Colonic mucosa (tissue), 4 donors: ENCODE measurements at regions of chr2 and their contacts with region 1.

Region 1: DNA sequence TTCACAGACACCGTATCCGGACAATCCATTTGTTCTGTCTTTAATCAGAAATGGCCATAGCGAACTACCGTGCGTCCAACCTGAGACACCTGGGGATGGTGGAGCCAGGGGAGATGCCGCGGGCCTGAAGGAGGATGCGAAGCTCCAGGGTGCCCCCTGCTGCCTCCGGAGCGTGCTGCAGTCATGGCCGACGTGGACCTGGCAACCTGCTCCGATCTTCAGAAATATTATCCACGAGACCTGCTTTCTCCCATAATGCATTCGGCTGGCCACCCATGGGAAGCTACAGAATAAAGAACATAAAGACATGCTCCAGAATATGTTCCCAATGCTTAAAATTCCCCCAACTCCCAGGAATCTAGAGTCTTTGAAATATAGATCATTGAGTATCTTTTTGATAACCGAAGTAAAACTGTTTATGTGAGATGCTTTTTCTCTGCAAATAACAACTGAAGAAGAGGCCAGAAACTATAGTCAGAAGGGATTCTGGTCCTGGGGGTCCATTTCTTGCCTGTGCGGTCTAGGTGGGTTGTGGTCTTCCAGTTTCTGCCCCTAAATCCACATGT is 30.7 kb upstream of the SLC66A3 start:
- DNase-seq: peak; percentile 80
- H3K4me3 ChIP-seq: no peak overlapping the region
- H3K27ac ChIP-seq: no peak overlapping the region
- H3K4me1 ChIP-seq: no peaks in the 10 kb centered on the region
- H3K27me3 ChIP-seq: no peaks in the 10 kb centered on the region
- CTCF ChIP-seq: peak; percentile 78

Region 2: DNA sequence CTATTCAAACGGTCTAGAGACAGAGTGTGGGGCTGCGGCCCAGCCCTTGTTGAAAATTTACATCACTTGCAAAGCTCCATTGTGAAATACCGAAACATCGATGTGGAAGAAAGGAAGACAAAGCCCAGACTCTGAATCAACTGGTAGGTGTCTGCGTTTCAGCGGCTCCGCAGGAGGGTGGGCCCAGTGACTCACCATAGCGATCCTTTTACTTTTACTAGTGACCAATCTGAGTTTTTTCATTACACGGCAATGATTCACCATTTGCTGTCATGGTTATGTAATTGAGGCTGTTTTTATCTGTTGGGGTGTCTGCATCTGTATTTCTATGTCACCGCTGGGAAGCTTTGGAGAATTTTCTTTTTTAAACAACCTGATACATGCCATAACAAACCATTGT is 609.8 kb before region 1 on chr2:
- intact Hi-C with region 1: no loop called
- DNase-seq: no peak
- H3K4me3 ChIP-seq: no peak overlapping the region
- H3K27ac ChIP-seq: no peak overlapping the region
- H3K4me1 ChIP-seq: no peaks in the 10 kb centered on the region
- H3K27me3 ChIP-seq: no peaks in the 10 kb centered on the region
- CTCF ChIP-seq: no peak

Region 3: GRCh38 chr2:10832203-10832936 is 292.2 kb before region 1 on chr2:
- intact Hi-C with region 1: loop called (anchors 2 kb)
- DNase-seq: peak; percentile 84
- H3K4me3 ChIP-seq: no peak overlapping the region
- H3K27ac ChIP-seq: no peak overlapping the region
- H3K4me1 ChIP-seq: peaks cover 4% of the 10 kb centered on the region
- H3K27me3 ChIP-seq: no peaks in the 10 kb centered on the region
- CTCF ChIP-seq: peak; percentile 97

Region 4: DNA sequence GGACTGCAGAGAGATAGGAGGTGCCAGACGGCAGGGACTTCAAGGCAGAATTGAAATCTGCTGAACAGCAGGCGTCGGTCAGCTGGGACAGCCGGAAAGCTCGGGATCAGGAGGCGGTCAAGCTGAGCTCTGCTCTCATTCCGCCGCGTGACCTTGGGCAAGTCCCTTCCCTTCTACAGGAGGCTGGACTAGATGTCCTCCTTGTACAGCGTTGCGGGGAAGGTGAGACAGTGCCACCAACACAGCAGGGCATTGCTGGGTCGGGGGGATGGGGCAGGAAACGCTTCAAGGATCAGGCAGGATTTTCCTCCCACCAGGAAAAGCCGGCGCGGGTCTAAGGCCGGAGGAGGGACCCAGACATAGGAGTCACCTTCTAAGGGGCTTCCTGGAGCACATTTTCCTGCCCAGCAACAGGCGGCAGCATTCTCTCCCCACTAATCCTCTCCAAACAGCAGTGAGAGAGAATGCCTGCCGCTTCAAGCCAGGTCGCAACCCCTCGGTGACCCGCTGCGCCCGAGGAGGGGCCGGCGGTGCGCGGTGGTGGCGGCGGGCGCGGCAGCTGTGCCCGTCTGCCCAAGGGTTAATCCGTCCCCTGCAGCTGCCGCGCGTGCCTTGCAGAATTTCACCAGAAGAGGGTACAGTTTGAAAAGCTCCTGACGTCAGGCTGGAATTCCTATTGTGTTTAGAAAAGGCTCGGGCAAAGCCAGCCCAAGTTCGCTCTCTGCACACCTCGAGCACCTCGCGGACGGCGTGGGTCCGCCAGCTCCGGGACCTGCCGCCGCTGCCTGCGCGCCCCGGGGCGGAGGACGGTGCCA is 213.1 kb before region 1 on chr2 and contains the start of gene KCNF1:
- intact Hi-C with region 1: loop called (anchors 5 kb)
- DNase-seq: peak; percentile 32
- H3K4me3 ChIP-seq: peak within 1 kb of the TSS; percentile 25
- H3K27ac ChIP-seq: no peak within 1 kb of the TSS
- H3K4me1 ChIP-seq: no peaks in the 10 kb centered on the region
- H3K27me3 ChIP-seq: peaks cover 28% of the 10 kb centered on the region
- CTCF ChIP-seq: no peak
- total RNA-seq, gene KCNF1: 0.22 to 0.90 TPM

Region 5: GRCh38 chr2:10971881-10972260 is 152.7 kb before region 1 on chr2:
- intact Hi-C with region 1: no loop called
- DNase-seq: no peak
- H3K4me3 ChIP-seq: no peak overlapping the region
- H3K27ac ChIP-seq: no peak overlapping the region
- H3K4me1 ChIP-seq: no peaks in the 10 kb centered on the region
- H3K27me3 ChIP-seq: no peaks in the 10 kb centered on the region
- CTCF ChIP-seq: no peak

Region 6: DNA sequence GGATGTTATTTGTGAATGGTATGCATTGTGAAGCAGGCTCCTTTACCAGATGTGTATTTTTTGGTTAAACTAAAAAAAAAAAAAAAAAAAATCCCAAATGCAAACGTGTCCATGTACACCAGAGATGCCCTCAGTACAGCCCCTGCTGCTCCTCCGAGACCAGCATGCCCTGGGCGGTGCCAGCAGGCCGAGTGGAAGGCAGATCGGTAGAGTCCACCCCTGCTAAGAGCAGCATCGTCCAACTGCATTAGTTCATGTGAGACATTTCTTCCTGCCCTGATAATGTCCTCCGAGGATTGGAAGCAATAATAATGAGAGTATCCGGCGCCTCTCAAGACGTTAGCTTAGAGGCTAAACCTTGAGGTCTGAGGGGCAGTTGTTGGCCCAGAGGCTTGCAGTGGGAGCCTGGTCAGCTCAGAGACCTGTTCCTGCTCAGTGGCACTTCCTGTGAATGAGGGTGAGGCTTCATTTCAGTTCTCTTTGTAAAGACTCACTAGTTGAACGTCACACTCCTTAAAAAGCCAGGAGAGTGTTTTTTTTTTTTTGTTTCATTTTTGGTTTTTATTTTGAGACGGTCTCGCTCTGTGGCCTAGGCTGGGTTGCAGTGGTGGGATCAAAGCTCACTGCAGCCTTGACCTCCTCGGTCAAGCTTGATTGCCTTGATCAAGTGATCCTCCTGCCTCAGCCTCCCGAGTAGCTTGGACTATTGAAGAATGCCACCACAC is 36.3 kb after region 1 on chr2:
- intact Hi-C with region 1: no loop called
- DNase-seq: no peak
- H3K4me3 ChIP-seq: no peak overlapping the region
- H3K27ac ChIP-seq: no peak overlapping the region
- H3K4me1 ChIP-seq: peaks cover 3% of the 10 kb centered on the region
- H3K27me3 ChIP-seq: no peaks in the 10 kb centered on the region
- CTCF ChIP-seq: no peak

Region 7: DNA sequence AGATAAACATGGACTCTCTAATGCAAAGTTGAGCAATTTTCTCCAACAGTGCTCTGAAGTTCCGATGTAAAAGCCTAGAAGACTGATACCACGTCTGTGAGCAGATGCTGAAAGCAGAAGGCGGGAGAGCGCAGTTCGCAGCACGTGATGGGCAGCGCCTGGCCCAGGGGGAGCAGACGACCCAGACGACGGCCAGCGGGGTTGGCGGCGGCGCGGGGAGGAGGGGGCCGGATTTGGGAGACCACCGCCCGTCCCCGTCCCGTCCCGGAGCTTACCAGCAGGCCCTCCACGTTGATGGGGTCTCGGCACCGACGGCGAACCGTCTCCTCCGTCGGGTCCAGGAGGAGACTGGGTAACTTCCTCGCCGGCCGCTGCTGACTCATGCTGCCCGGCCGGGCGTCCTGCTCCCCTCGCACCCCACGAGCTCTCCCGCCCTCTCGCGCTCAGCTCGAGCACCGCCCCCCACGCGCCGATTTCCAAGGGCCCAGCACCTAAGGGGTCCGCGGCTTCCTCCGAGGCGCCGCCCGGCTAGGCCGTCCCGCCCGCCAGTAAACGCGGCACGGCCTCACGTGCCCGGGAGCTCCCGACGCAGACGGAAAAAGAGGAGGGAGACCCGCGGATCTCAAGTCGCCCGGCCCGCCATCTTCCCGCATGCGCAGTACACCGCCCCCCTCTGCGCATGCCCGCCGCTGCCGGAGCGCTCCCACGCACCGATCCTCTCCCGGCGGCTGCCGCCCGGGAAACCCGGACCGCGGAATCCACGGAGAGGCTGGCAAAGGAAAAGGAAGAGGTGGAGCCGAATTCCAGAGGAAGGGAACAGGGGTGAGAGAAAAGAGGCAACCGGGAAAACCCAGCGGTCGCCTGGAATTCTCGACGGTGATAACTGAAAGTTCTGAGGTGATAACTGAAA is 341.2 kb after region 1 on chr2 and contains the start of gene E2F6:
- intact Hi-C with region 1: no loop called
- DNase-seq: peak; percentile 96
- H3K4me3 ChIP-seq: peak within 1 kb of the TSS; percentile 76
- H3K27ac ChIP-seq: peak within 1 kb of the TSS; percentile 89
- H3K4me1 ChIP-seq: peaks cover 3% of the 10 kb centered on the region
- H3K27me3 ChIP-seq: no peaks in the 10 kb centered on the region
- CTCF ChIP-seq: no peak
- total RNA-seq, gene E2F6: 6.6 TPM